ENCODE measurements at regions of chr19 and their contacts with region 1.

Region 1: GRCh38 chr19:19732579-19733501 is at the start of gene ZNF14:
- DNase-seq: peak; percentile 69 to 91 (median 89)
- ATAC-seq: peak; percentile 100
- H3K4me3 ChIP-seq: peak within 1 kb of the TSS; percentile 78
- H3K4me3 Mint-ChIP-seq: peak within 1 kb of the TSS; percentile 93 to 100 (median 98)
- H3K27ac ChIP-seq: peak within 1 kb of the TSS; percentile 87
- H3K27ac Mint-ChIP-seq: peak within 1 kb of the TSS; percentile 93 to 98 (median 95)
- H3K4me1 ChIP-seq: peaks cover 3 to 7% of the 10 kb centered on the region in 2 donors
- H3K4me1 Mint-ChIP-seq: peaks cover 16 to 39% (median 21%) of the 10 kb centered on the region in 7 donors
- H3K27me3 ChIP-seq: no peaks in the 10 kb centered on the region
- H3K27me3 Mint-ChIP-seq: no peaks in the 10 kb centered on the region
- total RNA-seq, gene ZNF14: 7.0 to 35.0 (median 30.3) TPM

Region 2: DNA sequence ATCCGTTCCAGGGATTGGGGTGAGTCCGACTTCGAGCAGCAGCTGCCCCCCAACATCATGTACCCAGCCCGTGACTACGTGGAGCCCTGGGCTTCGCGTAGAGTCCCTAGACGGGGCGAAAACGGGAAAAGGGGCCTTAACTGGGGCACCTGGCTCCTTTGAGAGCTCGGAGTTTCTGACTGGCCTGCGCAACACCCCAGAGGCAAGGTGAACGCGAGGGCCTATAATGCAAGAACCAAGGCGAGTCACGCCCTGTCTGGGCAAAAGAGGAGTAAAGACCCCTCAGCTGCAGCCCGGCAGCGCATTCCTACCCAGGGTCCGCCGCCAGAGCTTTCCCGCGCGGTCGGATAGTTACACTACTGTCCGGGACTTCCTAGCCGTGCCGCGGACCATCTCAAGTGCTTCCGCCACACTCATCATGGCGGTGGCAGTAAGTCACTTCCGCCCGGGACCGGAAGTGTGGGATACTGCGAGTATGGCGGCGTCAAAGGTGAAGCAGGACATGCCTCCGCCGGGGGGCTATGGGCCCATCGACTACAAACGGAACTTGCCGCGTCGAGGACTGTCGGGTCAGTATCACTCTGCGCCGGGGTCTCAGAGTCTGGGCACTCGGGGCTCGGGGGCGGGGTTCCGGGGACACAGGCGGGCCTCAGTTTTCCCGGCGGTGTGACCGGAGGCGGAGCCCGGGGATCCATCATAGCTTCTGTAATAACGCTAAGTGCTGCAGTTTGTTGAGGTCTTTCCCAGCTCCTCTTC is 216.9 kb before region 1 on chr19 and contains the start of gene NDUFA13:
- CTCF ChIA-PET with region 1: no interaction called
- POLR2A ChIA-PET with region 1: no interaction called
- intact Hi-C with region 1: loop called in 1 of 2 experiments (anchors 5 kb)
- DNase-seq: peak; percentile 88 to 98 (median 92)
- ATAC-seq: peak; percentile 96
- H3K4me3 ChIP-seq: peak within 1 kb of the TSS; percentile 96
- H3K4me3 Mint-ChIP-seq: peak within 1 kb of the TSS; percentile 89 to 98 (median 95)
- H3K27ac ChIP-seq: peak within 1 kb of the TSS; percentile 83
- H3K27ac Mint-ChIP-seq: peak within 1 kb of the TSS; percentile 89 to 98 (median 96)
- H3K4me1 ChIP-seq: peaks cover 13 to 14% of the 10 kb centered on the region in 2 donors
- H3K4me1 Mint-ChIP-seq: peaks cover 16 to 42% (median 27%) of the 10 kb centered on the region in 7 donors
- H3K27me3 ChIP-seq: no peaks in the 10 kb centered on the region
- H3K27me3 Mint-ChIP-seq: no peaks in the 10 kb centered on the region
- total RNA-seq, gene NDUFA13: 172 to 362 (median 176) TPM

Region 3: GRCh38 chr19:19677579-19677978 is 55.3 kb before region 1 on chr19:
- CTCF ChIA-PET with region 1: no interaction called
- POLR2A ChIA-PET with region 1: interaction called, 10 read pairs
- intact Hi-C with region 1: no loop called
- DNase-seq: no peak
- ATAC-seq: no peak
- H3K4me3 ChIP-seq: peak overlapping the region; percentile 22
- H3K4me3 Mint-ChIP-seq: peak overlapping the region in 6 of 10 donors; percentile 9 to 71 (median 48)
- H3K27ac ChIP-seq: no peak overlapping the region
- H3K27ac Mint-ChIP-seq: peak overlapping the region in 4 of 9 donors; percentile 28 to 58 (median 45)
- H3K4me1 ChIP-seq: no peaks in the 10 kb centered on the region
- H3K4me1 Mint-ChIP-seq: peaks cover 0 to 26% (median 17%) of the 10 kb centered on the region in 7 donors
- H3K27me3 ChIP-seq: no peaks in the 10 kb centered on the region
- H3K27me3 Mint-ChIP-seq: no peaks in the 10 kb centered on the region

Region 4: DNA sequence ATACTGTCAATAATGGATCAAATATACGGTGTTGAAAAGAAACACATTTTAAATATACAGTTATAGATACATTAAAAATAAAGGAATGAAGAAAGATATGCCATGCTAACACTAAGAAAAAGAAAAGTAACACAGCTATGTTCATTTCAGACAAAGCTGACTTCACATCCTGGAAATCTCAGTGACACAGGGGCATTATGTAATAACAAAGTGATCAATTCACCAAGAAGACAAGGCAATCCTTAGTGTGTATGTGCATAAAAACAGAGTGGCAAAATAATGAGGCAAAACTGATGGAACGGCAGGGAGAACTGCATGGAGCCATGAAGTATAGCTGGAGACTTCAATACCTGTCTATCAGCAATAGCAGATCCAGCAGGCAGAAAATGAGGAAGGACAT is 13.0 kb before region 1 on chr19:
- CTCF ChIA-PET with region 1: interaction called, 6 read pairs
- POLR2A ChIA-PET with region 1: interaction called, 18 read pairs
- intact Hi-C with region 1: loop called in 1 of 2 experiments (anchors 2 kb)
- DNase-seq: peak in 4 of 9 donors; percentile 25 to 37 (median 29)
- ATAC-seq: no peak
- H3K4me3 ChIP-seq: no peak overlapping the region
- H3K4me3 Mint-ChIP-seq: peak overlapping the region in 5 of 10 donors; percentile 4 to 69 (median 12)
- H3K27ac ChIP-seq: no peak overlapping the region
- H3K27ac Mint-ChIP-seq: peak overlapping the region in 2 of 9 donors; percentile 11 to 65
- H3K4me1 ChIP-seq: no peaks in the 10 kb centered on the region
- H3K4me1 Mint-ChIP-seq: peaks cover 0 to 15% (median 8%) of the 10 kb centered on the region in 7 donors
- H3K27me3 ChIP-seq: no peaks in the 10 kb centered on the region
- H3K27me3 Mint-ChIP-seq: no peaks in the 10 kb centered on the region

Region 5: DNA sequence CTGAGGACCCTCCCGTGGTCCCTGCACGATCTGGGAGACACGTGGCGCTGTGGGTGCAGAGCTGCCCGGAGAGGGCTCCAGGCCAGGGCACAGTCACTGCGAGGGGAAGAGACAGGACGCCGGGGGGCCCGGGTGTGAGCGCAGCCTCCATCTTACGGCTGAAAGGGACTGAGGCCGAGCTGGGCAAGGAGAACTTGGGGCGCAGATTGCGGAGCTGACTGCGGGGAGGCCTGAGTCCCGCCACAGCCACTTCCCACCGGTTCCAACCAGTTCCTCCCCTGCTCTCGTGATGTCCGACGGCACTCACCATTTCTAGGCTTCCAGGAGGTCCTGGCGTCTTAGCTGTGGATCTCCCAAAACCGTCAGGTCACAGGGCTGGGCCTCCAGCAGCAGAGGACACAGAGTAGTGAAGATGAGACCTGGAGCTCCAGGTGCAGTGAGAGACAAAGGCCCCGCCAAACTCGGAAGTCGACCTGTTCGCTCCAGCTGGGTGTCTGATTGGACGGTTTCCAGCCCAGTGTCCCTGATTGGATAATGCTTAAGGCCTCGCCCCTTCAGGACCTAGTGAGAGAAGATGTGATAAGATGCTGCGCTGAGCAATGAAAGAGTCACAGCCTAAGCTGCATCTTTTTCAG is 128.0 kb after region 1 on chr19:
- CTCF ChIA-PET with region 1: no interaction called
- POLR2A ChIA-PET with region 1: interaction called, 22 read pairs
- intact Hi-C with region 1: loop called in 1 of 2 experiments (anchors 1 kb)
- DNase-seq: peak in 8 of 9 donors; percentile 35 to 78 (median 62)
- ATAC-seq: peak; percentile 76
- H3K4me3 ChIP-seq: peak overlapping the region; percentile 41
- H3K4me3 Mint-ChIP-seq: peak overlapping the region; percentile 43 to 81 (median 68)
- H3K27ac ChIP-seq: peak overlapping the region; percentile 35
- H3K27ac Mint-ChIP-seq: peak overlapping the region in 7 of 9 donors; percentile 0 to 77 (median 52)
- H3K4me1 ChIP-seq: no peaks in the 10 kb centered on the region
- H3K4me1 Mint-ChIP-seq: peaks cover 5 to 15% (median 8%) of the 10 kb centered on the region in 7 donors
- H3K27me3 ChIP-seq: no peaks in the 10 kb centered on the region
- H3K27me3 Mint-ChIP-seq: no peaks in the 10 kb centered on the region

Region 6: DNA sequence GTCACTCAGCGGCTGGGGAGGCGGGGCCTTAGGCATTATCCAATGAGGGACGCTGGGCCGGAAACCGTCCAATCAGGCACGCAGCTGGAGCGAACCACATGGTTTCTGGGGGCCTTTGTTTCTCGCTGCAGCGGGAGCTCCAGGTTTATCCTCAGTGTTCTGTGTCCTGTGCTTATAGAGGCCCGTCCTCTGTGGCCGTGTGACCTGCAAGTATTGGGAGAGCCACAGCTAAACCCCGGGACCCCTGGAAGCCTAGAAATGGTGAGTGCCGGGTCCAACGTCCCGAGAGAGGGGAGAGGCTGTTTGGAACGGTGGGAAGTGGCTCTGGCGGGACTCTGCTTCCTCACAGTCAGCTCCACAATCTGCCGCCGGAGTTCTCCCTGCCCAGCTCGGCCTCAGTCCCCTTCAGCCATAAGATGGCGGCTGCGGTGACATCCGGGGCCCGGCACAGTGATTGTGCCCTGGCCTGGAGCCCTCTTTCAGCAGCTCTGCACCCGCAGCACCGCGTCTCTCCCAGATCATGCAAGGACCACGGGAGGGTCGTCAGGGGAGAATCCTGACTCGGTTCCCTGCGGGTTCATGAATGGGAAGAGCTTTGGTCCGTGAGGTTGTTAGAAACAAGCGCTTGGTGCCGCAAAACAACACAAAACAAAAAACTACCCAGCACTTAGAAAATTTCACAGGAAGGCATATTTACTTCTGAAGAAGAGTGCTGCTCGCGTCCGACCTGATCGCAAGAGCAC is 133.1 kb after region 1 on chr19 and contains the start of gene ZNF253:
- CTCF ChIA-PET with region 1: no interaction called
- POLR2A ChIA-PET with region 1: interaction called, 22 read pairs
- intact Hi-C with region 1: loop called in 1 of 2 experiments (anchors 1 kb)
- DNase-seq: peak; percentile 76 to 95 (median 92)
- ATAC-seq: peak; percentile 95
- H3K4me3 ChIP-seq: peak within 1 kb of the TSS; percentile 93
- H3K4me3 Mint-ChIP-seq: peak within 1 kb of the TSS; percentile 98 to 100 (median 100)
- H3K27ac ChIP-seq: peak within 1 kb of the TSS; percentile 86
- H3K27ac Mint-ChIP-seq: peak within 1 kb of the TSS; percentile 96 to 100 (median 99)
- H3K4me1 ChIP-seq: peaks cover 7 to 13% of the 10 kb centered on the region in 2 donors
- H3K4me1 Mint-ChIP-seq: peaks cover 21 to 41% (median 31%) of the 10 kb centered on the region in 7 donors
- H3K27me3 ChIP-seq: no peaks in the 10 kb centered on the region
- H3K27me3 Mint-ChIP-seq: no peaks in the 10 kb centered on the region
- total RNA-seq, gene ZNF253: 9.5 to 33.8 (median 14.8) TPM